ENCODE measurements at regions of chr12 and their contacts with region 1.

Region 1: DNA sequence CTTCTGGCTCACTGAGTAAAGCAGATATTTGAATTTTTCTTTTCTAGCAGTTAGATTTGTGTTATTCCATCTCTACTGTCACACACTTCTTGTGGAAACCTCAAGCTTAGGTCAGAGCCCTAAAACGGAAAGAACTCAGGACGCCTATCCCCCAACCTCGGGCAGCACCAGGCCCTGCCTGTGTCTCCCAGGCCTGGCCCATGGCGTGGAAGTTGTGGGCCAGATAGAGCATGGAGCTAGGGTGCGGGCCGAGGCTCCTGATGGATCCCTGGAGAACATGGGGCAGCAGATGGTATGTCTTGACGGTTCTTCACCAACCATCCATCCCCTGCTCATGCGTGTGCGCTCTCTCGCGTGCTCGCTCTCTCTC is 20.6 kb downstream of the P2RX4 start:
- DNase-seq: no peak
- ATAC-seq: peak; percentile 34
- H3K4me3 ChIP-seq: no peak overlapping the region
- H3K27ac ChIP-seq: peak overlapping the region; percentile 75
- H3K4me1 ChIP-seq: peaks cover 13 to 20% of the 10 kb centered on the region in 2 experiments
- H3K27me3 ChIP-seq: no peaks in the 10 kb centered on the region
- CTCF ChIP-seq: no peak
- POLR2A ChIP-seq: no peak
- RAD21 ChIP-seq: no peak

Region 2: GRCh38 chr12:121110211-121110940 is 120.1 kb before region 1 on chr12:
- CTCF ChIA-PET with region 1: no interaction called
- POLR2A ChIA-PET with region 1: no interaction called
- RAD21 ChIA-PET with region 1: no interaction called
- intact Hi-C with region 1: loop called (anchors 5 kb)
- DNase-seq: peak; percentile 56
- ATAC-seq: peak; percentile 92
- H3K4me3 ChIP-seq: no peak overlapping the region
- H3K27ac ChIP-seq: no peak overlapping the region
- H3K4me1 ChIP-seq: no peaks in the 10 kb centered on the region
- H3K27me3 ChIP-seq: no peaks in the 10 kb centered on the region
- CTCF ChIP-seq: peak; percentile 85 to 99 (median 93)
- POLR2A ChIP-seq: no peak
- RAD21 ChIP-seq: peak; percentile 95

Region 3: DNA sequence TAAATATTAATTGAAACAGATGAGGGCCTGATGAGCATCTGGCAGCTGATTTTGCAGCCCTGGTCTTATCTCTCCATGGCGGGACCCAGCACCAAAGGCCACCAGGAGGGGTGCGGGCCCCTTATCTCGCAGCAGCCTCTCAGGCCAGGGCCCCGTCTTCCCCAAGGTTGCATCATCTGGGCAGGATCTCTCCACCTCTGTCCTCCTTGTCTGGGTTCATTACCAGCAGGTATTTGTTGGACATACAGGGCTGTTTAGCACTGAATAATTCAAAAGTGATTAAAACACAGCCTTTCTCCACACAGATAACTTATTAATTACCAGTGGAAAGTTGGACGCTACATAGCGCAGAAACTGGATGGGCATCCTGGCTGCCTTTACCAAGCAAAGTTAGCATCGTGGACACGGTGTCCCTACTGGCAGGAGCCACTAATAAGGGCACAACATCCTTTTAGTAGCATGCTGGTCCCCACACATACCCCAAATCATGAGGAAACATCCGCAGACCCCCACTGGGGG is 507.9 kb after region 1 on chr12:
- CTCF ChIA-PET with region 1: no interaction called
- POLR2A ChIA-PET with region 1: no interaction called
- RAD21 ChIA-PET with region 1: no interaction called
- intact Hi-C with region 1: no loop called
- DNase-seq: no peak
- ATAC-seq: no peak
- H3K4me3 ChIP-seq: no peak overlapping the region
- H3K27ac ChIP-seq: no peak overlapping the region
- H3K4me1 ChIP-seq: peaks cover 23 to 31% of the 10 kb centered on the region in 2 experiments
- H3K27me3 ChIP-seq: no peaks in the 10 kb centered on the region
- CTCF ChIP-seq: no peak
- POLR2A ChIP-seq: no peak
- RAD21 ChIP-seq: no peak

Measured in HCT116 (cell line).